ENCODE measurements at regions of chr9 and their contacts with region 1.

Region 1: DNA sequence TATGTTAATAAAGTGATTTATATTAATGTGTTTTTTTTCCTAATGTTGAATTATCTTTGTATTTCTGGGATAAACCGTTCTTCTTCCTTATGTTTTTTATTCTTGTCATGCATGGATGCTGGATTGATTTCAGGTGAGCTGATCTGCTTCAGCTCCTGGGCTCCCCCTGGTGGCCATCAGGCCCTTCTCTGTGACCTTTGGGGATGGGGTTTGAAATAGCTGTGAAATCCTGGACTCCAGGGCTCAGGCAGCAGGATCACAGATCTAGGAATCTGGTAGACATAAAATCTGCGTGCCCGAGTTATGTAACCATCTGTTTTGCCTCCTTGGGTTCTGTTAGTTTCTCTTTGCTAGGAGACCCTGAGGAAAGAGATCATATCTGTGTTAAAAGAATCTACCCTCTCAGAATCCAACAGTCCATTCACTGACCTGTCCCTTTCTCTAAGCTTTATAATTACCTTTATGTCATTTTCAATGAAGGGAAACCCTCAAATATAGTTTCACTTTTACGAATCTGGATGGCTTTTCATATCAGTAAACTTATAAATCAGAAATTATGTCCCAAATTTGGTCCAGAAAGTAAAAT is 12.2 kb upstream of the OR13J1 start:
- DNase-seq: peak; percentile 92
- H3K4me3 ChIP-seq: no peak overlapping the region
- H3K27ac ChIP-seq: no peak overlapping the region
- H3K4me1 ChIP-seq: no peaks in the 10 kb centered on the region
- H3K27me3 ChIP-seq: no peaks in the 10 kb centered on the region
- CTCF ChIP-seq: peak; percentile 83 to 96 (median 93)
- POLR2A ChIP-seq: no peak

Region 2: DNA sequence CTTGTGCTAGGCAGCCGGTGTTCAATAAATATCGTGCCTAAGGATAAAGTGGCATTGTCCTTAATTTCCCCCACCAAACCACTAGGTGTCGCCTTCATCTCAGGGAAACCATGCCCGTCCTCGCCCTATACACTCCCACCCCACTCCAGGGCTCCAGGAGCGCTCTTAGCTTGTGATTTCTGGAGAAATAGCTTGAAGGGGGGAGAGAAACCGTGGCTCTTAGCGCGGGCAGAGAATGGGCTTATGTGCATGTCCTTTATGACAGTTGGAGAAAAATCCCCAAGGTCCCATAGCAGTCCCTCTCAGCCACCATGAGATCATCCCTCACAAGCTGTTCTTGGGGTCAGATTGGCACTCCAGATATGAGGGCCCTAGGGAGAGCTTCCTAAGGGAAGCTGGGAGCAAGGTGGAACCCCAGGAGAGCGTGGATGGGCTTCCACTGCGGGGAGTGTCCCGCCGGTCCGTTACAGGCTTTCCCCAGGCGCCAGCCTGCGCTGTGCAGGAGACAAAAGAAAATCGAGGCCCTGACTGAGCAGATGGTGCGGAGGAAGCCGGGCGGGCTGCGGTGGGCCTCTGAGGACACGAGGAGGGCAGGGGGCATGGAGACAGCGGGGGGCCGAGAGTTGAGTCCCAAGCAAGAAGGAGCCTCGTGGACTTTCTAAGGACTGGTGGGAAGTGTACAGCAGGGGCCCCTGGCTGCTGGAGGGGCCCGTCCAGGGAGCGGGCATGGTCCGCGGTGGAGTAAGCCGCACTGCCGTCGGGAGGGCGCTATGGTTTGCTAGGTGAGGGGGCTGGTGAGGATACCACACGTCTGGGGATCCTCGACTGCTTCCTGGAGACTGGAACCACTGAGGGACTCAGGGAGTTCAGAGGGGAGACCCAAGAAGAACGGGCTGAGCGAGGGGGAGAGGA is 91.7 kb before region 1 on chr9:
- intact Hi-C with region 1: loop called (anchors 2 kb)
- DNase-seq: no peak
- H3K4me3 ChIP-seq: peak overlapping the region in 3 of 8 donors; percentile 32 to 62 (median 44)
- H3K27ac ChIP-seq: peak overlapping the region in 5 of 8 donors; percentile 25 to 60 (median 34)
- H3K4me1 ChIP-seq: peaks cover 7 to 22% (median 14%) of the 10 kb centered on the region in 6 donors
- H3K27me3 ChIP-seq: peaks cover 0 to 12% (median 0%) of the 10 kb centered on the region in 7 donors
- CTCF ChIP-seq: peak; percentile 65 to 95 (median 82)
- POLR2A ChIP-seq: no peak

Measured in spleen (tissue), 13 donors.